ENCODE measurements at regions of chr12 and their contacts with region 1.

Region 1: DNA sequence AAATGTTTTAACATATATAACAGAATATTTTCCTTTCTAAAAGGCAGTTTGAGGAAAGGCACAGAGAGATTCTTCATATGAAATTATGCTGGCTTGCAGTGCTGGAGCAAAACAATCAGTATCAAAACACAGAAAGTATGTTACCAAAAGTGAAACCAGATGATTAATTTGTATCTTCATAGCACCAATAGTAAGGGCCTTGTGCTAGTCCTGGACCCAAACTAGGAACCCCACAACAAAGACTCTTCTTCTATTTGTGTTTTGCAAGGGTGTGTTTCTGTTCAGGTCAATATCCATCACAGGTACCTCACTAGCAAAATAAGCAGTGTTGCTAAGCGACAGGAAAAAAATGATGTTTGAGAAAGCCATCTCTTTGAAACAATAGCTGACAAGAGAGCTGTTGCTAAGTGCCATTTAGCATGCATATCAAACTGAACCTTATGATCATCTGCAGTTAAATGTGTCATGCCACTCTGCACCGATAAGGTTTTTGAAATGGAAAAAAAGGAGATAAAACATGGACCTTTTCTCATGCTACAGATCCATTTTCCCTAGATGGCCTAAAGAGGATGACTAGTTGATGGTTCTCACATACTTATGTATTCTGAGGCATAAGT is 196.2 kb upstream of the ALG10 start:
- DNase-seq: no peak
- ATAC-seq: no peak
- H3K4me3 ChIP-seq: no peak overlapping the region
- H3K27ac ChIP-seq: no peak overlapping the region
- H3K4me1 ChIP-seq: no peaks in the 10 kb centered on the region
- H3K27me3 ChIP-seq: no peaks in the 10 kb centered on the region
- CTCF ChIP-seq: no peak

Region 2: GRCh38 chr12:33765614-33766013 is 60.5 kb before region 1 on chr12:
- intact Hi-C with region 1: loop called in 1 of 10 experiments (anchors 10 kb)
- DNase-seq: no peak
- ATAC-seq: no peak
- H3K4me3 ChIP-seq: no peak overlapping the region
- H3K27ac ChIP-seq: no peak overlapping the region
- H3K4me1 ChIP-seq: no peaks in the 10 kb centered on the region
- H3K27me3 ChIP-seq: no peaks in the 10 kb centered on the region
- CTCF ChIP-seq: no peak